ENCODE measurements at regions of chr17 and their contacts with region 1.

Region 1: GRCh38 chr17:10844621-10845387 is 6.9 kb upstream of the PIRT start:
- DNase-seq: peak; percentile 26 to 90 (median 74)

Region 2: GRCh38 chr17:10585529-10585928 is 259.3 kb before region 1 on chr17:
- intact Hi-C with region 1: no loop called
- DNase-seq: no peak

Region 3: DNA sequence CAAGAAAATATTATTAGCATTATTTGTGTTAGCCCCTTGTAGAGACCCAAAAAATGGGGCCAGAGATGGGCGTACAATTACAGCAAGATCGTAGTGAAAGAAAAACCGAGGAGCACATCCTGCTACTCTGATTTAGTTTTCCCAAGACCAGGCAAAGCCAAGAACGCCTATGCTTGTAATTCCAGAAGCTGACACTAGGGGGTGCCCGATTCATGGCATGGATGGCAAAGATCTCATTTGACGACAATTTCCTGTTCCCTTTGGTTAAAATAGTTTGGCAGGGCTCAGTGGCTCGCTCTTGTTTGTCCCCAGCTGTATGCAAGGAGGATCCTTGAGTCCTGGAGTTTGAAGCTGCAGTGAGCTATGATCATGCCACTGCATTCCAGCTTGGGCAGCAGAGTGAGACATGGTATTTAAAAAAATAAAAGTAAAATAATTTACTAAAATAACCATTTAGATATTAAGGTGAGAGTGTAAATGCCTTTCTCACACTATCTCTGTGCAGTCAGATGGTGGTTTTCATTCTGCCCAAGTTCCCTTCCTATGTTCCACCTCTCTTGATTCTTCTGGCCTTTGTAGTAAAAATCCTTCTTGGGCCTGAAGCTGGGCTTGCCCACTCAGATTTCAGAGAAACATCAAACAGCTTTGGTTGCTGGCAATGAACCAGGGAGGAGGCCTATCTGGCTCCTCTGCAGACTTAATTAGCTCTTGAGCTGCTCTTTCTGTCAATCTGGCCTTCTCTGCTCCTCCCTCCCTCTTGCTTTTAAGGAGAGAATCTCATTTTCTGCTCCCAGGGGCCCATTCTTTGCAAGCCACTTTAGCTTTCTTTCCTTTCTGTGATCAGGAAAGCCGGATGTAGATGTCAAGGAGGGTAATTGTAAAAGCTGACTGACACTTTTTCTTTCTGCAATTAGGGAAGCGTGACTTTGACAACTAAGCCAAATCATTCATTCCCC is 72.1 kb before region 1 on chr17:
- intact Hi-C with region 1: loop called (anchors 2 kb)
- DNase-seq: peak in 5 of 42 donors; percentile 6 to 24 (median 19)

Region 4: DNA sequence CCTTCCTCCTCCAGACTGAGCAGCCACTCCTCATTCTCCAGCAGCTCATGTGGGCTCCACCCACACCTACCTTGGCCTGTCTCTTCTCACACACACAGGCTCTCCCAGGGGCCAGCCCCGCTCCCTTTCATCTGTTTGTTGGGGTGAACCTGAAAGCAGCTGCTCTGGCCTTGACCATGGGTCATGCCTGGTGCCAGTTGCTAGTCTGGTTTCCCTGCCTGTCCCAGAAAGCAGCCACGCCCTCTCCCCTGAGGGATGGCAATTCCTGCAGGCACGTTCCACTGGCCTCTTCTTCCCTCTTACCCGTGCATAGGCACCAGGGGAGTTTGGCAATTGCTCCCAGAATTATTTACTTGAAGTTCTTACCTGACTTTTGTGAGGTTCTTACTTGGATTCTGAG is 29.4 kb before region 1 on chr17:
- intact Hi-C with region 1: no loop called
- DNase-seq: no peak

Region 5: GRCh38 chr17:10920558-10921108 is 75.8 kb after region 1 on chr17:
- intact Hi-C with region 1: no loop called
- DNase-seq: no peak